PC-9 (cell line): ENCODE measurements at regions of chrX and their contacts with region 1.

Region 1: GRCh38 chrX:65587616-65588526 is 53.3 kb upstream of the LAS1L start:
- DNase-seq: peak in 1 of 2 experiments; percentile 49
- H3K4me3 ChIP-seq: no peak overlapping the region
- H3K27ac ChIP-seq: no peak overlapping the region
- H3K4me1 ChIP-seq: no peaks in the 10 kb centered on the region
- H3K27me3 ChIP-seq: no peaks in the 10 kb centered on the region
- CTCF ChIP-seq: no peak

Region 2: GRCh38 chrX:65607070-65607742 is 19.3 kb after region 1 on chrX:
- CTCF ChIA-PET with region 1: interaction called, 23 read pairs
- POLR2A ChIA-PET with region 1: no interaction called
- intact Hi-C with region 1: no loop called
- DNase-seq: no peak
- H3K4me3 ChIP-seq: no peak overlapping the region
- H3K27ac ChIP-seq: no peak overlapping the region
- H3K4me1 ChIP-seq: peaks cover 10% of the 10 kb centered on the region; the same call in 1 of the 2 replicates
- H3K27me3 ChIP-seq: no peaks in the 10 kb centered on the region
- CTCF ChIP-seq: no peak